Head of caudate nucleus (tissue), 42 donors: ENCODE measurements at regions of chr19 and their contacts with region 1.

Region 1: DNA sequence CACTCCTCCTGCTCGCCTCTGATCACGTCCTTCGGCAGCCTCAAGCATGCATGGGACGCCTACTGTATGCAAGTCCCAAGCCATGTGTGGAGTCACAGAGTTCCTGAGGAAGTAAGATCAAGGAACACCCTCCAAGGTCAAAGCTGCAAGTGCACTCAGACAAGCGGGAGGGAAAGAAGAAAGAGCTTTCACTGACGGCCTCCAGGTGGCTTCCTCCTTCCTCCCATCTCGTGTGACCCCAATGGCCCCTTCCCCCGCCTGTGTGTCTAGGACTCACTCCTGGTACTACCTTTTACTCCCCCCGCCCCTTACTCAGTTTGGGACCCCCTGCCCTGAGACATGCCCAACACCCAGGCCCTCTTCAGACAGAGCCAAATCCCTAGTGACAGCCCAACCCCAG is 6.0 kb downstream of the HAUS8 start:
- DNase-seq: no peak

Region 2: GRCh38 chr19:17235618-17236377 is 166.6 kb after region 1 on chr19:
- intact Hi-C with region 1: loop called (anchors 10 kb)
- DNase-seq: peak in 41 of 42 donors; percentile 62 to 93 (median 82)